ENCODE measurements at regions of chr15 and their contacts with region 1.

Region 1: DNA sequence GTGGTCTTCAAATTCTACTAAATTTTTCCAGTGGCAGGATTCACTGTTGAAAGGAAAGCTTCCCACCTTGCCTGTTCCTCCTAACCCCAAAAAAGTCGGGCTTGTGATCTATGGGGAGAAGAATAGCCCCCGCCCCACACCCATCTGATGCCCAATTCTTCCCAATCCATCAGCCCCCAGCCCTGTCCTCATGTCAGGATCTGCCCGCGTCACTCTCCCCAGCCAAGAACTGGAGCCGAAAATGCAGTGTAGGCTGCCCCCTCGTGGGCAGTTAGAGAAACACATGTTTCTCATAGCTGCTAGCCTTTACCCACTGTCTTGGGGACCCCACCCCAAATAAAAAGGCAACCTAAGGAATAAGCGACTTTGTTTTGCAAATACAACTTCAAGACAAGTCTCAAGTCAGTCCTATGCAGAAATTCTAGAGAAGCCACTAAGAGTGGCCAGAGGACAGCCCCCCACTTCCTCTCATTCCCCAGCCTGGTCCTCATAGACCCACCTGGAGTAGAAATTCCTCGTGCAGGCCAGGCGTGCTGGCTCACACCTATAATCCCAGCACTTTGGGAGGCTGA is 13.0 kb upstream of the CSK start:
- DNase-seq: peak; percentile 57 to 83 (median 68)
- ATAC-seq: peak; percentile 38 to 65 (median 56)
- H3K4me3 ChIP-seq: peak overlapping the region in 2 of 12 donors; percentile 20 to 27
- H3K27ac ChIP-seq: no peak overlapping the region
- H3K4me1 ChIP-seq: peaks cover 0 to 16% (median 3%) of the 10 kb centered on the region in 12 donors
- H3K27me3 ChIP-seq: peaks cover 0 to 6% (median 0%) of the 10 kb centered on the region in 9 donors
- CTCF ChIP-seq: peak; percentile 73 to 92 (median 84)
- POLR2A ChIP-seq: no peak

Region 2: GRCh38 chr15:74373731-74374647 is 394.9 kb before region 1 on chr15:
- intact Hi-C with region 1: loop called in 9 of 10 experiments (anchors 2 to 10 kb)
- DNase-seq: peak; percentile 91 to 94 (median 94)
- ATAC-seq: peak; percentile 95 to 99 (median 97)
- H3K4me3 ChIP-seq: peak overlapping the region; percentile 28 to 74 (median 60)
- H3K27ac ChIP-seq: peak overlapping the region in 2 of 12 donors; percentile 26 to 48
- H3K4me1 ChIP-seq: peaks cover 0 to 21% (median 13%) of the 10 kb centered on the region in 12 donors
- H3K27me3 ChIP-seq: peaks cover 0 to 5% (median 0%) of the 10 kb centered on the region in 9 donors
- CTCF ChIP-seq: peak; percentile 82 to 94 (median 88)
- POLR2A ChIP-seq: no peak

Region 3: GRCh38 chr15:74438721-74439316 is 330.0 kb before region 1 on chr15:
- intact Hi-C with region 1: loop called in 1 of 10 experiments (anchors 5 kb)
- DNase-seq: peak; percentile 62 to 83 (median 68)
- ATAC-seq: peak; percentile 39 to 69 (median 66)
- H3K4me3 ChIP-seq: no peak overlapping the region
- H3K27ac ChIP-seq: no peak overlapping the region
- H3K4me1 ChIP-seq: peaks cover 0 to 20% (median 8%) of the 10 kb centered on the region in 12 donors
- H3K27me3 ChIP-seq: no peaks in the 10 kb centered on the region
- CTCF ChIP-seq: peak; percentile 87 to 98 (median 90)
- POLR2A ChIP-seq: no peak

Region 4: GRCh38 chr15:74635228-74635627 is 133.6 kb before region 1 on chr15:
- intact Hi-C with region 1: loop called (anchors 1 to 2 kb)
- DNase-seq: peak in 1 of 5 donors; percentile 67
- ATAC-seq: peak; percentile 60 to 77 (median 74)
- H3K4me3 ChIP-seq: no peak overlapping the region
- H3K27ac ChIP-seq: no peak overlapping the region
- H3K4me1 ChIP-seq: peaks cover 0 to 3% (median 0%) of the 10 kb centered on the region in 12 donors
- H3K27me3 ChIP-seq: no peaks in the 10 kb centered on the region
- CTCF ChIP-seq: peak; percentile 65 to 90 (median 86)
- POLR2A ChIP-seq: no peak

Region 5: DNA sequence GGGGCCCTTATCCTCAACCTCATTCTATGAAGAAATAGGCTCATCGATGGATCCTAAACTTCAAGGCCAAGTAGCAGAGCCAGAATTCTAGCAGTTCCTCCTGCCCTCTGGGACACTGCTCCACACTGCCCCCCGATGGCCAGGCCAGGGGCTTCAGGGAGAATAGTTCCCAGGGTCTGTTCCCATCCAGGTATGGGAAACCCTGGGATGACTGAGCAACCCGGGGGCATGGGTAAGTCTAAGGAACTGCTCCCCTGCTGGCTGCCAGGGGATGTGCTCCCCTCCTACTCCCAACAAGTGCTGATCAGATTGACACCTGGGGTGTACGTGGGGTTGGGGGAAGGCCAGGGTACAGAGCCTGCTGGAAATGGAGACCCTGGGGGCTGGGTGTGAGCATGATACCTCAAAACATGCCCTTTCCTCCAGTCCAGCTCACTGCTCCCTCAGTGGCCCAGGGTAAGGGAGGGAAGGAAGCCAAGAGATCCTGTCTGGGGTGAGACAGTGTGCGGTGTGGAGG is 66.5 kb after region 1 on chr15:
- intact Hi-C with region 1: loop called in 3 of 10 experiments (anchors 2 to 5 kb)
- DNase-seq: peak in 4 of 5 donors; percentile 44 to 83 (median 64)
- ATAC-seq: peak; percentile 17 to 55 (median 34)
- H3K4me3 ChIP-seq: no peak overlapping the region
- H3K27ac ChIP-seq: no peak overlapping the region
- H3K4me1 ChIP-seq: peaks cover 0 to 14% (median 6%) of the 10 kb centered on the region in 12 donors
- H3K27me3 ChIP-seq: no peaks in the 10 kb centered on the region
- CTCF ChIP-seq: peak; percentile 64 to 89 (median 72)
- POLR2A ChIP-seq: no peak

Region 6: GRCh38 chr15:74950078-74951000 is 181.5 kb after region 1 on chr15:
- intact Hi-C with region 1: loop called (anchors 1 to 2 kb)
- DNase-seq: peak in 4 of 5 donors; percentile 55 to 70 (median 56)
- ATAC-seq: peak in 3 of 4 donors; percentile 68 to 83 (median 77)
- H3K4me3 ChIP-seq: no peak overlapping the region
- H3K27ac ChIP-seq: no peak overlapping the region
- H3K4me1 ChIP-seq: peaks cover 0 to 19% (median 9%) of the 10 kb centered on the region in 12 donors
- H3K27me3 ChIP-seq: no peaks in the 10 kb centered on the region
- CTCF ChIP-seq: peak; percentile 92 to 98 (median 95)
- POLR2A ChIP-seq: no peak

Region 7: GRCh38 chr15:75327005-75327404 is 558.1 kb after region 1 on chr15:
- intact Hi-C with region 1: no loop called
- DNase-seq: no peak
- ATAC-seq: no peak
- H3K4me3 ChIP-seq: no peak overlapping the region
- H3K27ac ChIP-seq: no peak overlapping the region
- H3K4me1 ChIP-seq: no peaks in the 10 kb centered on the region
- H3K27me3 ChIP-seq: no peaks in the 10 kb centered on the region
- CTCF ChIP-seq: no peak
- POLR2A ChIP-seq: no peak

Measured in heart left ventricle (tissue), 16 donors.